WTC11 (cell line): ENCODE measurements at regions of chr1 and their contacts with region 1.

Region 1: GRCh38 chr1:27556781-27557595 is 47.0 kb downstream of the AHDC1 start:
- DNase-seq: peak; percentile 91
- ATAC-seq: peak; percentile 76
- H3K4me3 Mint-ChIP-seq: peak overlapping the region; percentile 50
- H3K27ac Mint-ChIP-seq: peak overlapping the region; percentile 99
- H3K4me1 Mint-ChIP-seq: peaks cover 54% of the 10 kb centered on the region
- H3K27me3 Mint-ChIP-seq: no peaks in the 10 kb centered on the region
- CTCF ChIP-seq: peak; percentile 97

Region 2: GRCh38 chr1:27306892-27307761 is 249.9 kb before region 1 on chr1:
- CTCF ChIA-PET with region 1: interaction called, 12 read pairs
- POLR2A ChIA-PET with region 1: no interaction called
- DNase-seq: peak; percentile 67
- ATAC-seq: peak; percentile 85
- H3K4me3 Mint-ChIP-seq: peak overlapping the region; percentile 50
- H3K27ac Mint-ChIP-seq: peak overlapping the region; percentile 79
- H3K4me1 Mint-ChIP-seq: peaks cover 25% of the 10 kb centered on the region
- H3K27me3 Mint-ChIP-seq: peaks cover 4% of the 10 kb centered on the region
- CTCF ChIP-seq: no peak

Region 3: DNA sequence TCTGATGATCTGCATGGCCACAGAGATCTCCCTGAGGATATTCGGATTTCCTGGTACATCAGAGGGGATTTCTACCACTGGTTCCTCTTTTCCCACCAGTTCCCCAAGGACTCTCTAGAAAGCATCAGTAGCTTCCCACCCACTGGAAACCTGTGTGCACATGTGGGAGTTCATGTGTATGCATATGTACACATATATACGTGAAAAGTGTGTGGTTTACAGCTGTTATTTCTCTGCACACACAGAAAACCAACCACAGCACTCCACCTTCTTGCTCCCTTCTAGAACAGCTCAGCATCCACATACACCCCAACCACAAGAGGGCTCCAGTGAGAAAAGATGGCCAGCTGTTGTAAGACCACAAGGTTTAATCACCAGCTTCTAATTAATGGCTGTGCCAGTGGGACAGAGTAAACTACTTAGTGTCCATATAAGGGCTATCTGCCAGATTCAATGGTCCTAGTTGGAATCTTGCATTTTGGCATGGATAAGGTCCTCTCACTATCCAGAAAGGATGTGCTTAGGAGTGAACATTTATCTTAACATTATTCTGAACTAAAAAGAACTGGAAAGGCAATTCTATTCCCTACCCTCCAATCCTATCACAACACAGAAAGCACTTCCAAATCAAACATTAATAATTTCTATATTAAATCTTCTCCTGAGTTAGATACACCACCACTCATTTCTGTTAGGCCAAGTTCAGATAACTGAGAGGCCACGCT is 140.4 kb before region 1 on chr1:
- CTCF ChIA-PET with region 1: interaction called, 30 read pairs
- POLR2A ChIA-PET with region 1: no interaction called
- DNase-seq: no peak
- ATAC-seq: peak; percentile 67
- H3K4me3 Mint-ChIP-seq: no peak overlapping the region
- H3K27ac Mint-ChIP-seq: peak overlapping the region; percentile 50; the same call in 1 of the 2 replicates
- H3K4me1 Mint-ChIP-seq: peaks cover 41% of the 10 kb centered on the region
- H3K27me3 Mint-ChIP-seq: no peaks in the 10 kb centered on the region
- CTCF ChIP-seq: 0 out of 2 replicates have a peak, but pooled peaks have one; percentile 1

Region 4: GRCh38 chr1:27525296-27526272 is 31.4 kb before region 1 on chr1:
- CTCF ChIA-PET with region 1: interaction called, 35 read pairs
- POLR2A ChIA-PET with region 1: interaction called, 7 read pairs
- DNase-seq: peak; percentile 79
- ATAC-seq: peak; percentile 50
- H3K4me3 Mint-ChIP-seq: peak overlapping the region; percentile 55
- H3K27ac Mint-ChIP-seq: peak overlapping the region; percentile 85
- H3K4me1 Mint-ChIP-seq: peaks cover 70% of the 10 kb centered on the region
- H3K27me3 Mint-ChIP-seq: no peaks in the 10 kb centered on the region; the same call in 1 of the 2 replicates
- CTCF ChIP-seq: no peak

Region 5: GRCh38 chr1:27574871-27575831 is 18.2 kb after region 1 on chr1:
- CTCF ChIA-PET with region 1: interaction called, 489 read pairs
- POLR2A ChIA-PET with region 1: interaction called, 17 read pairs
- DNase-seq: peak; percentile 86
- ATAC-seq: peak; percentile 33
- H3K4me3 Mint-ChIP-seq: peak overlapping the region; percentile 63
- H3K27ac Mint-ChIP-seq: peak overlapping the region; percentile 71; the same call in 1 of the 2 replicates
- H3K4me1 Mint-ChIP-seq: peaks cover 56% of the 10 kb centered on the region
- H3K27me3 Mint-ChIP-seq: no peaks in the 10 kb centered on the region
- CTCF ChIP-seq: peak; percentile 28; the same call in 1 of the 2 replicates

Region 6: DNA sequence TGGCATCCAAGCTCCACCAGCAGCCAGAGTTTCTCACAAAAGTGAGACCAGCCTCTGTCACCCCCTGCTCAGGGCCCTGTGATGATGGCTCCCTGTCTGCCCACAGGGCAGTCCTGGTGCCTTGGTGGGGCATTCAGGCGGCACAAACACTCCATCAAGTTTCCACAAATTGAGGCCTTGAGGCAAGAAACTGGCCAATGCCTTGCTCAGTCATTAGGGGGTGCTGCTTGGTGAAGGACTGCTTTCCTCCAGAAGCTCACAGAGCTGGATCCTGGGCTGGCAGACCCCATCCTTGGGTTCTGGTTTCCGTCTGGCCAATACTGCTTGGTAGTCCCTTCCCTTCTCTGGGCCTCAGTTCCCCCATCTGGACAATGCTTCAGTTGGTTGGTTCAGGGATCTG is 59.5 kb after region 1 on chr1:
- CTCF ChIA-PET with region 1: interaction called, 38 read pairs
- POLR2A ChIA-PET with region 1: no interaction called
- DNase-seq: no peak
- ATAC-seq: peak; percentile 6; the same call in 1 of the 2 replicates
- H3K4me3 Mint-ChIP-seq: peak overlapping the region; percentile 48
- H3K27ac Mint-ChIP-seq: no peak overlapping the region
- H3K4me1 Mint-ChIP-seq: peaks cover 15% of the 10 kb centered on the region
- H3K27me3 Mint-ChIP-seq: peaks cover 15% of the 10 kb centered on the region
- CTCF ChIP-seq: no peak

Region 7: GRCh38 chr1:27725374-27726173 is 168.6 kb after region 1 on chr1 and contains the start of gene FAM76A:
- CTCF ChIA-PET with region 1: interaction called, 12 read pairs
- POLR2A ChIA-PET with region 1: no interaction called
- DNase-seq: peak; percentile 100
- ATAC-seq: peak; percentile 96
- H3K4me3 Mint-ChIP-seq: peak within 1 kb of the TSS; percentile 84
- H3K27ac Mint-ChIP-seq: peak within 1 kb of the TSS; percentile 90
- H3K4me1 Mint-ChIP-seq: peaks cover 8% of the 10 kb centered on the region
- H3K27me3 Mint-ChIP-seq: peaks cover 11% of the 10 kb centered on the region
- CTCF ChIP-seq: no peak
- total RNA-seq, gene FAM76A: 12.5 to 14.5 TPM (median 12.8 TPM) in 3 replicates